GM10248 (cell line): ENCODE measurements at regions of chr9 and their contacts with region 1.

Region 1: DNA sequence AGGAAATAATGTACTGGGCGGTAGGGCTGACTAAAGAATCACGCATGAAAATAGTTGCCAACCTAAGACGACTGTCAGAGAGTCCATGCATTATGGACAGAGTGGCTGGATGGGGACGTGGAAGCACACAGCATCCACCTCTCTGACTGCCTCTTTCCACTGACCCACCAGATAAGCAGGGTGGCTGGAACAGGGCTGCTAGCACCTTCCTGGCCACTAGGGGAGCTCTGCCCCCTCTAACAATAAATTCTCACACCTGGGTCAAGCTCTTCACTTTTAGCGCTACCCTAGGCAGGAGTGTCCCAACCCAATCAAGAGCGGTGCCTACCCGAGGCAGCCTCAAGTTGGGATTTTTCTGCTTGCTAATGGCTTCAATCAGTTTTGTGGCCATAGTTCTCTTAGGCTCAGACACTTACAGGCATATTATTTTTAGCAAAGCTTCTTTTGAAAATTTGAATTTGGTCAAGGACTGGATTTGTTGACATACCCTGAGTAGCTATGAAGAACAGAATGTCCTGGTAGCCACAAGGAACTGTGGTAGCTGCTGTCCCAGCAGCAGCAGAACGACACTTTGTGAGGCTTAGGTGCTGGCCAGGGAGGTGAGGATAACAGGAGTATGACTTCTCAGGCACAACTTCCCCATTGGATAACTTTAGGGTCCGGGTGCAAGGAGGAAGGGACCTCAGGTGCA is 6.9 kb upstream of the TPM2 start:
- DNase-seq: peak; percentile 85
- CTCF ChIP-seq: peak; percentile 94

Region 2: DNA sequence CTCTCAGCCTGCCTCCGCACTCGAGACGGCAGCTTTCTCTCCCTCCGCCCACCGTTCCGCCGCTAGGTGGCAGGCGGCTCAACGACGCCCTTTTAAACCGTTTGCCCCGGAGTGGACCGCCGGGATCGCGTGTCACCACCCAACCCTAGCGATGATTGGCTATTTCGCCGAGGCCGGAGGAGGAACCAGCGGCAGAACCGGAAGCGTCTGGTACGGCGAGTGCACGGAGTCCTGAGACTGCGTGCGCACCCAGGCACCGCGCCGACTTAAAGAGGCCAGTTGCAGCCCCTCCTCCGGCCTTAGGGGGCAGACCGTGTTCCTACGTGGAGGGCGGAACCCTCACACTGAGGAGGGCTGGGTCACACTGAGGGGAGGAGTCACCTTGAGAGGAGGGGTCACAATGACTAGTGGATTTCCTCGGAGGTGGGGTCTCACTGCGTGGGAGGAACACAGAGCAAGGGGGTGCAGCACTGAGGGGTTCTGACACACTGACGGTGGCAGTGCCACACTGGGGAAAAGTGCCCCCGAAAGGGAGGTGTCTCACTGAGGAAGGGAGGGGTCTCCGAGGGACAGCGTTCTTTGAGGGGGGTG is 92.6 kb before region 1 on chr9:
- CTCF ChIA-PET with region 1: interaction called, 16 read pairs
- POLR2A ChIA-PET with region 1: no interaction called
- DNase-seq: peak; percentile 98
- CTCF ChIP-seq: peak; percentile 97

Region 3: DNA sequence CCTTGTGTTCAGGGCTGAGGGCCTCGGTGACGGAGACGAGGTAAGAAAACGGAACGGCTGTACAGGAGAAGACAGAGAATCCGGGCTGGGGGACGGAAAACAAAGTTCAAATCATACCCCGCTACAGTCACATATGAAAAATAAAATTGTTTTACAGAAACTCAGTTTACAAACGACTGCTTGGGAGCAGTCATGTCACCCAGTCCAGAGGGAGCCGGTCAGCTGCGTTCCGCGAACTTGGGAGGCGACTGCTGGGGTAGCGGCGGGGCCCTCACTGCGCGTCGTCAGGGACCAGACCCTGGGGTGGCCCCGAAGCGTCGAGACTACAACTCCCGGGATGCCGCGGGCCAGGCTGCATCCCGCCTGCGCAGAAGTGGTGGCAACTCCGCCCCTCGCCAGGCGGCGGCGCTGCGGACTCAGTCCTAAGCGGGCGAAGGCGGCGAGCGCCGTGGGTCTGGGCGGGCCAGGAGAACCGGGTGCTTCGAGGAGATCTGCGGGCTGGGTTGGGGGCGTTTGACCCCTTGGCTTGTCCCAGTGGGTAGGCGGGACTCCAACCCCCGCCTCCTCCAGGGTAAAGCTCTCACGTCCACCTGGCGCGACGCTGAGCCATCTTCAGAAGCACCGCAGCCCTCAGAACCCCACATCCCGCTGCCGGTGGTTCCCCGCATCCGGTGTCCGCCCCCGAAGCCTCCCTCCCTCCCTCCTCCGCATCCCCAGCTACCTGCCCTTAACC is 50.0 kb before region 1 on chr9:
- CTCF ChIA-PET with region 1: interaction called, 26 read pairs
- POLR2A ChIA-PET with region 1: no interaction called
- DNase-seq: peak; percentile 94
- CTCF ChIP-seq: peak; percentile 98

Region 4: GRCh38 chr9:35657546-35658136 is 39.0 kb before region 1 on chr9 and contains the start of gene RMRP:
- CTCF ChIA-PET with region 1: interaction called, 62 read pairs
- POLR2A ChIA-PET with region 1: no interaction called
- DNase-seq: peak; percentile 92
- CTCF ChIP-seq: no peak

Region 5: GRCh38 chr9:35664531-35665470 is 31.9 kb before region 1 on chr9 and contains the start of gene ARHGEF39:
- CTCF ChIA-PET with region 1: interaction called, 62 read pairs
- POLR2A ChIA-PET with region 1: no interaction called
- DNase-seq: peak; percentile 93
- CTCF ChIP-seq: peak; percentile 61

Region 6: GRCh38 chr9:35675732-35676392 is 20.8 kb before region 1 on chr9:
- CTCF ChIA-PET with region 1: interaction called, 37 read pairs
- POLR2A ChIA-PET with region 1: no interaction called
- DNase-seq: peak; percentile 70
- CTCF ChIP-seq: no peak

Region 7: DNA sequence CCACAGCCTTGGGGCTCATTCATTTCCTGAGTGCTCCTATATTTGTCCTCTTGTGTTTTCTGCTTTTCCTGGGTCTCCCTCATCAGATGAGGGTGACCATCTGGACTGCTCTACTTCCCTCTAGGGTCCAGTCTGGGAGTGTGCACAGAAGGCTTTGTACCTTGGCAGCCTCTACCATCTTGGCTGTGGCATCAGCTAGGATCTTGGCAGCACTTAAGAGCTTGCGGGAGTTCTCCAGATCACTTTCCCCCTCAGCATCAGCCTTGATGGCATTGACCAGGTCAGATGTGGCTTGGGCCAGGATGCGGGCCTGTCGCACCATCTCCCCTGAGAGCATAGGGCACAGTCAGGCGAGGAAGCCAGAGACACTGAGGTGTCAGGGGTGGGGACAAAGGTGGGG is 19.6 kb after region 1 on chr9:
- CTCF ChIA-PET with region 1: interaction called, 224 read pairs
- POLR2A ChIA-PET with region 1: interaction called, 4 read pairs
- DNase-seq: no peak
- CTCF ChIP-seq: no peak

Region 8: GRCh38 chr9:35962126-35962906 is 265.6 kb after region 1 on chr9:
- CTCF ChIA-PET with region 1: no interaction called
- POLR2A ChIA-PET with region 1: no interaction called
- DNase-seq: no peak
- CTCF ChIP-seq: no peak